HCT116 (cell line): ENCODE measurements at regions of chr17 and their contacts with region 1.

Region 1: DNA sequence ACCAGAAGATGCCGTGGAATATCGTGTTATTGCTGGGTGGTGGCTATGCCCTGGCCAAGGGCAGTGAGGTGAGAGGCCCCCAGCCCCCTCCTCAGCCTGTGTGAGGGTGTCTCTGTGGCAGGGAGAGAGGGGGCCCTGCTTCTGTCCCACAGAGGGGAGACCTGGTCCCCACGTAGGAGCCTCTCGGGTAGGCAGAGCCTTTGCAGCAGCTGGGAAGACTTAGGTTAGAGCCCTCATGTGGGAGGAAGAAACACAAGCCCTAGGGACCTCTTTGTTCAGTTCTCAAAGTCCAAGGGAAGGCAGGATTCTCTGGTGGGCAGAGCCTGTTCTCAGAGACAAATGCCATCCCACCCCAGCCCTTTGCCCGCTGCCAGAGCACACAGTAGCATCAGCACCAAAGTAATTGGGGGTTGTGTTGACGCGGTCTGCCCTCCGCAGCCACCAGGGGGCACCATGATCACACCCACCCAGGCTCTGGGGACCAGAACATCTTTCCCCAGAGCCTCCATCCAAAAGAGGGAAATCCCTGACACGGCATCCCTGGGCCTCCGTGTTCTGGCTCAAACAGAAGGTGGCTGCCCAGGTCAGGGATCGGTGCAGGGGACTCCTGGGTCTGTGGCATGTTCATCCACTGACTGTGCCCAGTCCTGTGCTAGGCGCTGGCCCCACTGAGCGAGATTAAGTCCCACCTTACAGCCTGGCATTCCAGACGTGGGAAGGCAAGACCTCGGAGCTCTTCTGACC is 11.5 kb upstream of the FOXN1 start:
- DNase-seq: peak; percentile 27
- ATAC-seq: peak; percentile 94
- H3K4me3 ChIP-seq: no peak overlapping the region
- H3K27ac ChIP-seq: no peak overlapping the region
- H3K4me1 ChIP-seq: no peaks in the 10 kb centered on the region; a peak in 1 of 4 replicates
- H3K27me3 ChIP-seq: no peaks in the 10 kb centered on the region
- CTCF ChIP-seq: peak; percentile 91 to 93 (median 93)
- POLR2A ChIP-seq: no peak
- RAD21 ChIP-seq: peak; percentile 94

Region 2: GRCh38 chr17:28295677-28296578 is 198.7 kb before region 1 on chr17:
- CTCF ChIA-PET with region 1: no interaction called
- POLR2A ChIA-PET with region 1: no interaction called
- RAD21 ChIA-PET with region 1: no interaction called
- intact Hi-C with region 1: no loop called
- DNase-seq: no peak
- ATAC-seq: no peak
- H3K4me3 ChIP-seq: no peak overlapping the region
- H3K27ac ChIP-seq: no peak overlapping the region
- H3K4me1 ChIP-seq: peaks cover 0 to 4% of the 10 kb centered on the region in 2 experiments; a peak in 1 of 4 replicates
- H3K27me3 ChIP-seq: no peaks in the 10 kb centered on the region
- CTCF ChIP-seq: no peak
- POLR2A ChIP-seq: no peak
- RAD21 ChIP-seq: no peak

Region 3: GRCh38 chr17:28398280-28398981 is 96.2 kb before region 1 on chr17:
- CTCF ChIA-PET with region 1: no interaction called
- POLR2A ChIA-PET with region 1: no interaction called
- RAD21 ChIA-PET with region 1: no interaction called
- intact Hi-C with region 1: no loop called
- DNase-seq: no peak
- ATAC-seq: no peak
- H3K4me3 ChIP-seq: no peak overlapping the region
- H3K27ac ChIP-seq: no peak overlapping the region
- H3K4me1 ChIP-seq: no peaks in the 10 kb centered on the region
- H3K27me3 ChIP-seq: no peaks in the 10 kb centered on the region
- CTCF ChIP-seq: no peak
- POLR2A ChIP-seq: no peak
- RAD21 ChIP-seq: no peak

Region 4: GRCh38 chr17:28460901-28461300 is 33.7 kb before region 1 on chr17:
- CTCF ChIA-PET with region 1: no interaction called
- POLR2A ChIA-PET with region 1: no interaction called
- RAD21 ChIA-PET with region 1: no interaction called
- intact Hi-C with region 1: no loop called
- DNase-seq: no peak
- ATAC-seq: no peak
- H3K4me3 ChIP-seq: no peak overlapping the region
- H3K27ac ChIP-seq: no peak overlapping the region
- H3K4me1 ChIP-seq: no peaks in the 10 kb centered on the region
- H3K27me3 ChIP-seq: peaks cover 5% of the 10 kb centered on the region; the same call in 1 of the 2 replicates
- CTCF ChIP-seq: no peak
- POLR2A ChIP-seq: no peak
- RAD21 ChIP-seq: no peak

Region 5: DNA sequence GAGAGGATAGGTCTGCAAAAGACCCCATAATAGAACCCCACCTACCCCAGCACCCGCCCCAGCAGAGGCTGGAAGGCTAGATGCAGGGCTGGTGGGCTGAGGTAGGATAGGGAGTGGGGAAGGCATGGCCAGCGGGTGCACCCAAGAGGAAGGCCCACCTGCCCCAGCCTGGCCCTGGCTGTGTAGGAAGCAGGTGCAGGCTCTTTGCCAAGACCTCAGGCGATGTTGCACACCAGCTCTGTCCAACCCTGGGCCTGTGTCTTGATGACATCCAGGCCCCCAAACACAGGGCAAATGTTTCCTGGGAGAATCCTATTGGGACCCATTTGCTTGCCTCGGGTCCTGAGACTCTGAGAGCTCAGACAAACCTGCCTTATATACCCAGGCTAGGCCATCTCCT is 45.6 kb after region 1 on chr17:
- CTCF ChIA-PET with region 1: interaction called, 5 read pairs
- POLR2A ChIA-PET with region 1: no interaction called
- RAD21 ChIA-PET with region 1: interaction called in 1 of 2 experiments, 3 read pairs
- intact Hi-C with region 1: loop called (anchors 1 kb)
- DNase-seq: no peak
- ATAC-seq: no peak
- H3K4me3 ChIP-seq: no peak overlapping the region
- H3K27ac ChIP-seq: no peak overlapping the region
- H3K4me1 ChIP-seq: no peaks in the 10 kb centered on the region
- H3K27me3 ChIP-seq: no peaks in the 10 kb centered on the region
- CTCF ChIP-seq: no peak
- POLR2A ChIP-seq: no peak
- RAD21 ChIP-seq: no peak

Region 6: GRCh38 chr17:28547623-28548416 is 53.2 kb after region 1 on chr17:
- CTCF ChIA-PET with region 1: no interaction called
- POLR2A ChIA-PET with region 1: no interaction called
- RAD21 ChIA-PET with region 1: no interaction called
- intact Hi-C with region 1: loop called (anchors 2 kb)
- DNase-seq: peak; percentile 68
- ATAC-seq: peak; percentile 83
- H3K4me3 ChIP-seq: no peak overlapping the region
- H3K27ac ChIP-seq: no peak overlapping the region
- H3K4me1 ChIP-seq: peaks cover 2 to 23% of the 10 kb centered on the region in 2 experiments; a peak in 3 of 4 replicates
- H3K27me3 ChIP-seq: no peaks in the 10 kb centered on the region
- CTCF ChIP-seq: peak; percentile 97 to 99 (median 99)
- POLR2A ChIP-seq: no peak
- RAD21 ChIP-seq: peak; percentile 65

Region 7: GRCh38 chr17:28612936-28613872 is 118.6 kb after region 1 on chr17:
- CTCF ChIA-PET with region 1: no interaction called
- POLR2A ChIA-PET with region 1: no interaction called
- RAD21 ChIA-PET with region 1: no interaction called
- intact Hi-C with region 1: loop called (anchors 1 kb)
- DNase-seq: no peak
- ATAC-seq: peak; percentile 84
- H3K4me3 ChIP-seq: no peak overlapping the region
- H3K27ac ChIP-seq: no peak overlapping the region
- H3K4me1 ChIP-seq: no peaks in the 10 kb centered on the region
- H3K27me3 ChIP-seq: no peaks in the 10 kb centered on the region
- CTCF ChIP-seq: peak; percentile 42 to 84 (median 82); a peak in 5 of 6 replicates
- POLR2A ChIP-seq: no peak
- RAD21 ChIP-seq: peak; percentile 52

Region 8: DNA sequence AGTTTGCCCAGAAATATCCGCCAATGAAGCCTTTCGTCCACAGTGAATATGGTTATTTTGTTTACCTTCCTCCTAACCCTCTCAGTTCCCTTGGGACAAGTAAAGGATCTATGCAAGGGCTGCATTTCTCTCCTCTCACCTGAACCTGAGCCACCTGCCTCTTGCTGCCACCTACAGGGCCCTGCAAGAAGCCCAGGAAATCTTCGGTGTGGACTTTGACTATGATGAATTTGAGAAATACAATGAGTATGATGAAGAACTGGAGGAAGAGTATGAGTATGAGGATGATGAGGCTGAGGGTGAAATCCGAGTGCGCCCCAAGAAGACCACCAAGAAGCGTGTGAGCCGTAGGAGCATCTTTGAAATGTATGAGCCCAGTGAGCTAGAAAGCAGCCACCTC is 181.4 kb after region 1 on chr17:
- CTCF ChIA-PET with region 1: no interaction called
- POLR2A ChIA-PET with region 1: no interaction called
- RAD21 ChIA-PET with region 1: no interaction called
- intact Hi-C with region 1: loop called (anchors 10 kb)
- DNase-seq: peak; percentile 10
- ATAC-seq: peak; percentile 89
- H3K4me3 ChIP-seq: no peak overlapping the region
- H3K27ac ChIP-seq: no peak overlapping the region
- H3K4me1 ChIP-seq: no peaks in the 10 kb centered on the region
- H3K27me3 ChIP-seq: no peaks in the 10 kb centered on the region
- CTCF ChIP-seq: peak; percentile 44 to 76 (median 70); a peak in 5 of 6 replicates
- POLR2A ChIP-seq: no peak
- RAD21 ChIP-seq: peak; percentile 54

Region 9: DNA sequence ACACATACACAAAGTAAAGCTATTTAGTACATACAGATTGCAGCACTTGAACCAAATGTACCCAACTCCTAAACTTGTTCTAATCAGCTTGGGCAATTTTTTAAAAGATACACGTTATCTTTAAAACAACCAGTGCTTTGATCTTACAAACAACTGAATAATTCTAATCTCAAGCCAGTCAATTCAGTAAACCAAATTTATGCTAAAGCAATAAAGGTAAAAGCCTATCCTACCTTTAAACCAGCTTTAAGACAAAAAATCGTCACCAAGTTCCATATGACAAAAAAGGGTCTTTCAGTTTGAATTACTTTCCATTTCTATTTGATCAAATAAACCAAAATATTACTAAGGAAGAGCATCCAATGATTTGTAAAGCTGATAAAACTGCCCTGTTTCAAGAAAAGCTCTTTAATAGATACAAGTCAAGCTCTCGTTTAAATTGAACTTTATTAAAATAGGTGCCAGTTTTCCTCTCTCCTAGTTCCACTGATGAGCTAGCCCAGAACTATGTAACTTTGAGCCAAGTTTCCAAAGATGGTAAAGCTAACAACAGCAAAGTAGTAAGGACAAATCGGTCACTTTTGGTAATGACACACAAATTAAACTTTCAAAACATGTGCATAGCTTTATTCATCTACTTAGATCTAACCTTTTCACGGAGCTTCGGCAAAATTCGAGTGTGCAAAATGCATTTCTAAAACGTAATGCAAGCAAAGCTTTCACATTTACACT is 762.3 kb after region 1 on chr17:
- CTCF ChIA-PET with region 1: no interaction called
- POLR2A ChIA-PET with region 1: no interaction called
- RAD21 ChIA-PET with region 1: no interaction called
- intact Hi-C with region 1: no loop called
- DNase-seq: no peak
- ATAC-seq: no peak
- H3K4me3 ChIP-seq: no peak overlapping the region
- H3K27ac ChIP-seq: no peak overlapping the region
- H3K4me1 ChIP-seq: no peaks in the 10 kb centered on the region
- H3K27me3 ChIP-seq: no peaks in the 10 kb centered on the region
- CTCF ChIP-seq: no peak
- POLR2A ChIP-seq: no peak
- RAD21 ChIP-seq: no peak